ENCODE measurements at regions of chr16 and their contacts with region 1.

Region 1: GRCh38 chr16:77675464-77676324 is 46.6 kb upstream of the NUDT7 start:
- DNase-seq: peak; percentile 34 to 79
- ATAC-seq: peak; percentile 75 to 93 (median 86)
- H3K4me3 ChIP-seq: no peak overlapping the region
- H3K4me3 Mint-ChIP-seq: no peak overlapping the region
- H3K27ac ChIP-seq: no peak overlapping the region
- H3K27ac Mint-ChIP-seq: no peak overlapping the region
- H3K4me1 ChIP-seq: no peaks in the 10 kb centered on the region
- H3K4me1 Mint-ChIP-seq: no peaks in the 10 kb centered on the region
- H3K27me3 ChIP-seq: no peaks in the 10 kb centered on the region
- H3K27me3 Mint-ChIP-seq: no peaks in the 10 kb centered on the region
- CTCF ChIP-seq: peak; percentile 85

Region 2: DNA sequence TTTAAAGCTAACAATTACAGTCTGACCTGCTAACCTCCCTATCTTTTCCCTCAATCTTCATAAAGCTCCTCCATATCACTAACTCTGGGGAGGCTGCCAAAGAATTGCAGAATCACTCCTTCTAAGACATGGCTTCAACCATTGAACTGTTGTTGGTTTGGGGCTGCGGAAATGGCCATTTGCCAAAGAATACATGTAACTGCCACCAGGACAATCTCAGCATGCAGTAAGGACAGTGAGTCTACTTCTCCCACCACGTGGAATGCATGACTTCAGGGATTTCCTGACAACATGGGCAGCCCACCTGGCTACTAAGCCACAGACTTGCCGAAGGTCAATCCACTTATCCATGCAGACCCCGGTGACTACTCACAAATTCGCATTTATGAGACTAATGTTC is 57.7 kb before region 1 on chr16:
- intact Hi-C with region 1: no loop called
- DNase-seq: no peak
- ATAC-seq: no peak
- H3K4me3 ChIP-seq: no peak overlapping the region
- H3K4me3 Mint-ChIP-seq: no peak overlapping the region
- H3K27ac ChIP-seq: no peak overlapping the region
- H3K27ac Mint-ChIP-seq: no peak overlapping the region
- H3K4me1 ChIP-seq: no peaks in the 10 kb centered on the region
- H3K4me1 Mint-ChIP-seq: no peaks in the 10 kb centered on the region
- H3K27me3 ChIP-seq: peaks cover 3% of the 10 kb centered on the region
- H3K27me3 Mint-ChIP-seq: peaks cover 13 to 42% of the 10 kb centered on the region in 2 donors
- CTCF ChIP-seq: no peak

Region 3: DNA sequence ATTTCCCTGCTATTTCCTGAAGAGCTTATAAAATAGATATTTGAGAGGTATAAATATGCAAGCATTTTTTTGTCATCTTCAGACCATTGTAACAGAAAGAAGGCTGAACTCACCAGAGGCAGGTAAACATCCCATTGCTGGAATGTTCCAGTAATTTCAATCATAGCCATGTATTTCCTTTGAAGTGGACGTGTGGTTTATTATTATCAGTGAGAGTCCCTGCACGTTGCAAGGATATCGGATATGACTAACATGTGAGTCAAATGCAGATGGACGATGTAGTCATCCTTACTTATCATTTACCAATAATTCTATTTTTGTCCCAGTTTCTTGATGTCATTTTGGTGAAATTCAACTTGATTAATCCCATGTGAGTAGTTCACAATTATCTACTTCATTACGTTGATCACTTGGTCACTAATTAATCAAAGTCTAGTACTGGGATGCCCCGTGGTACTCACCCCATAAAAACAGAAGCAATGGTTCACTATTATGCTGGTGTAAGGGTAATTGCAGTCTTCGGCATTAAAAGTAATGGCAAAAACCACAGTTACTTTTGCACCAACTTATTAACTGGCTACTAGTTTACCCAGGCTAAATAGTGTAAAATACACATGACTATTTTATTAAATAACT is 202.1 kb after region 1 on chr16:
- intact Hi-C with region 1: no loop called
- DNase-seq: no peak
- ATAC-seq: no peak
- H3K4me3 ChIP-seq: no peak overlapping the region
- H3K4me3 Mint-ChIP-seq: no peak overlapping the region
- H3K27ac ChIP-seq: no peak overlapping the region
- H3K27ac Mint-ChIP-seq: no peak overlapping the region
- H3K4me1 ChIP-seq: no peaks in the 10 kb centered on the region
- H3K4me1 Mint-ChIP-seq: no peaks in the 10 kb centered on the region
- H3K27me3 ChIP-seq: no peaks in the 10 kb centered on the region
- H3K27me3 Mint-ChIP-seq: peaks cover 6 to 7% of the 10 kb centered on the region in 2 donors
- CTCF ChIP-seq: no peak

Region 4: GRCh38 chr16:77971306-77972271 is 295.9 kb after region 1 on chr16:
- intact Hi-C with region 1: loop called (anchors 1 kb)
- DNase-seq: peak; percentile 65 to 82
- ATAC-seq: peak in 2 of 3 donors; percentile 56 to 70
- H3K4me3 ChIP-seq: no peak overlapping the region
- H3K4me3 Mint-ChIP-seq: no peak overlapping the region
- H3K27ac ChIP-seq: no peak overlapping the region
- H3K27ac Mint-ChIP-seq: no peak overlapping the region
- H3K4me1 ChIP-seq: no peaks in the 10 kb centered on the region
- H3K4me1 Mint-ChIP-seq: no peaks in the 10 kb centered on the region
- H3K27me3 ChIP-seq: no peaks in the 10 kb centered on the region
- H3K27me3 Mint-ChIP-seq: peaks cover 5 to 7% of the 10 kb centered on the region in 2 donors
- CTCF ChIP-seq: peak; percentile 68

Region 5: GRCh38 chr16:78002915-78003538 is 327.3 kb after region 1 on chr16:
- intact Hi-C with region 1: loop called (anchors 1 kb)
- DNase-seq: peak; percentile 26 to 75
- ATAC-seq: peak; percentile 69 to 86 (median 74)
- H3K4me3 ChIP-seq: no peak overlapping the region
- H3K4me3 Mint-ChIP-seq: no peak overlapping the region
- H3K27ac ChIP-seq: no peak overlapping the region
- H3K27ac Mint-ChIP-seq: no peak overlapping the region
- H3K4me1 ChIP-seq: no peaks in the 10 kb centered on the region
- H3K4me1 Mint-ChIP-seq: no peaks in the 10 kb centered on the region
- H3K27me3 ChIP-seq: no peaks in the 10 kb centered on the region
- H3K27me3 Mint-ChIP-seq: peaks cover 0 to 5% of the 10 kb centered on the region in 2 donors
- CTCF ChIP-seq: peak; percentile 72

Region 6: DNA sequence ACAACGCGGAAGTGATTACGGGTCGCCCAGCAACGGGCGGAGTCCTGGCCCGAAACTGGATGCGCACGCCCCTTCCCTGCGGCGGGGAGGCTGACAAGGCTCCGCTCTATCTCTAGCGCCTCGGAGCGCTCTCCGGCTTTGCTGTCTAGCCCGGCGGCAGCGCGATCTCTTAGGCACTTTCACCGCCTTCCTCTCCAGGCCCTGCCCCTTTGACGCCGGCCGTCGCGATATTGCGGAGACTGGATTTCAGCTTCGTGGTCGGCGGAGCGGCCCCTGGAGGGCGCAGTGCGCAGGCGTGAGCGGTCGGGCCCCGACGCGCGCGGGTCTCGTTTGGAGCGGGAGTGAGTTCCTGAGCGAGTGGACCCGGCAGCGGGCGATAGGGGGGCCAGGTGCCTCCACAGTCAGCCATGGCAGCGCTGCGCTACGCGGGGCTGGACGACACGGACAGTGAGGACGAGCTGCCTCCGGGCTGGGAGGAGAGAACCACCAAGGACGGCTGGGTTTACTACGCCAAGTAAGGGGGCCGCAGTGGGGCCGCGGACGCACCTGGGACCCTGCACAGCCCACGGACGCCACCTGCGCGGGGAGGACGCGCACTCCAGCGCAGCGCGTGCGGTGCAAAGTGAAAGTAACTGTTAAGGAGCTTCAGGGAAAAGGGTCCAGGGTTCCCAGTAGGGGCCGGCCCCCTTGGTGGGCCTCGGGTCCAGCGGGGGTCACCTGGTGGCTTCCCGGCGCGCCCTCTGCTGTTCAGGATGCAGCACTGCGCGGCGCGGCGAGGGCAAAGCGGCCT is 423.9 kb after region 1 on chr16 and contains the start of gene WWOX:
- intact Hi-C with region 1: loop called (anchors 5 kb)
- DNase-seq: peak; percentile 92 to 98
- ATAC-seq: peak; percentile 93 to 98 (median 94)
- H3K4me3 ChIP-seq: peak within 1 kb of the TSS; percentile 80
- H3K4me3 Mint-ChIP-seq: peak within 1 kb of the TSS; percentile 95
- H3K27ac ChIP-seq: peak within 1 kb of the TSS; percentile 86
- H3K27ac Mint-ChIP-seq: peak within 1 kb of the TSS; percentile 93
- H3K4me1 ChIP-seq: peaks cover 11% of the 10 kb centered on the region
- H3K4me1 Mint-ChIP-seq: peaks cover 12 to 26% of the 10 kb centered on the region in 2 donors
- H3K27me3 ChIP-seq: no peaks in the 10 kb centered on the region
- H3K27me3 Mint-ChIP-seq: peaks cover 7 to 11% of the 10 kb centered on the region in 2 donors
- CTCF ChIP-seq: peak; percentile 96
- total RNA-seq, gene WWOX: 21.0 to 29.8 (median 27.0) TPM